ENCODE measurements at regions of chr17 and their contacts with region 1.

Region 1: DNA sequence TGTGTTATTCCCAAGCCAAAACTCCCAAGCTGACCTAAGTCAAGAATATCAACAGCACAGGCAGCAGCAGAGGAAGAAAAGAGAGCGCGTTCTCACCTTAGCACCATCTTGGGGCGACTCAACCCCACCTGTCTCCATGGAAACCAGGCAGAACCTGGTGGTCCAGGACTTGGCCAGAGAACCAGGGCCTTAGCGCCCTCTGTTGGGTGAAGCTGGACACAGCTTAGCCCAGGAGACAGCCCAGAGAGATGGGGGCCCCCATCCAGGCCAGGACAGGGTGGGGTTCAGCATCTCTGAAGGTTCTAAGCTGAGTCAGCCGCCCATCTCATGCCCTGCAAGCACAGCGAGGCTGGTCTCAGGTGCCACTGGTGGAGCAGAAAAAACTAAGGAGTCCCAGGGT is 60.1 kb upstream of the TMEM132E start:
- H3K4me3 Mint-ChIP-seq: no peak overlapping the region
- H3K27ac Mint-ChIP-seq: no peak overlapping the region
- H3K4me1 Mint-ChIP-seq: no peaks in the 10 kb centered on the region
- H3K27me3 Mint-ChIP-seq: peaks cover 6% of the 10 kb centered on the region

Region 2: DNA sequence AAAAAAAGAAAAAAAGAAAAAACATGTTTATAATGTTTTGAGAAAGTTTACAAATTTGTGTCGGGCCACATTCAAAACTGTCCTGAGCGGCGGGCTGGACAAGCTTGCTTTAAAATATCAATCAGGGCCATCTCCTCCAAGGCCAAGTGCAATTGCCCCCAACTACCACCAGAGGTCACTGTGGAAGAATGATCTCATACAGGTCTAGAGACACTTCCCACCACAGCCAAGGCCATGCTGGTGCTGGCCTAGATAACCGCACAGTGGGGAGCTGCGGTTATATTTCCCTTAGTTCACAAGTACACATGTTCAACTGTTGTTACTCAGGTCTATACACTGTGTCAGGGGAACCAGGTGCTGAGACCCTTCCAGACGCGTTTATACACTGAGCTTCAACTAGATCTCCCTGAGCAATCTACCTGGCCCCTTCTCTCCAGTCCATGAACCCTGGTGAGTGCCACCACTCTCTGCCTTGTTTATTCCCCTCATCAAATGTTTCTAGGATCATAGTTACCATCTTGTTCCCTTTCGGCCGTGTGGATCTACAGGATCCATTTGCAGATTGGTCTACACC is 347.9 kb before region 1 on chr17:
- intact Hi-C with region 1: loop called (anchors 10 kb)
- H3K4me3 Mint-ChIP-seq: no peak overlapping the region
- H3K27ac Mint-ChIP-seq: no peak overlapping the region
- H3K4me1 Mint-ChIP-seq: peaks cover 27% of the 10 kb centered on the region
- H3K27me3 Mint-ChIP-seq: peaks cover 4% of the 10 kb centered on the region

Region 3: DNA sequence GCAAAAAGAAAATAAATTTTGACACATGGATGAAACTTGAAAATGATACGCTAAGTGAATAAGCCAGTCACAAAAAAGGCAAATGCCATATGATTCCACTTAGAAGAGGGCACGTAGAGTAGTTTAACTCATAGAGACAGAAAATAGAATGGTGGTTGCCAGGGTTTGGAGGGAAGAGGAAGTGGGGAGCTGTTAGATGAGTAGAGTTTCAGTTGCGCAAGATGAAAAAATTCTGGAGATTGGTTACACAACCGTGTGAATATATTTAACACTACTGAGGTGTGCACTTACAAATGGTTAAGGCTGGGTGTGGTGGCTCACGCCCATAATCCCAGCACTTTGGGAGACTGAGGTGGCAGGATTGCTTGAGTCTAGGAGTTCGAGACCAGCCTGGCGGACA is 33.3 kb before region 1 on chr17:
- intact Hi-C with region 1: no loop called
- H3K4me3 Mint-ChIP-seq: no peak overlapping the region
- H3K27ac Mint-ChIP-seq: no peak overlapping the region
- H3K4me1 Mint-ChIP-seq: peaks cover 20% of the 10 kb centered on the region
- H3K27me3 Mint-ChIP-seq: peaks cover 38% of the 10 kb centered on the region

Region 4: GRCh38 chr17:34499576-34499975 is 19.7 kb before region 1 on chr17:
- intact Hi-C with region 1: no loop called
- H3K4me3 Mint-ChIP-seq: no peak overlapping the region
- H3K27ac Mint-ChIP-seq: no peak overlapping the region
- H3K4me1 Mint-ChIP-seq: no peaks in the 10 kb centered on the region
- H3K27me3 Mint-ChIP-seq: peaks cover 23% of the 10 kb centered on the region